ENCODE measurements at regions of chr1 and their contacts with region 1.

Region 1: DNA sequence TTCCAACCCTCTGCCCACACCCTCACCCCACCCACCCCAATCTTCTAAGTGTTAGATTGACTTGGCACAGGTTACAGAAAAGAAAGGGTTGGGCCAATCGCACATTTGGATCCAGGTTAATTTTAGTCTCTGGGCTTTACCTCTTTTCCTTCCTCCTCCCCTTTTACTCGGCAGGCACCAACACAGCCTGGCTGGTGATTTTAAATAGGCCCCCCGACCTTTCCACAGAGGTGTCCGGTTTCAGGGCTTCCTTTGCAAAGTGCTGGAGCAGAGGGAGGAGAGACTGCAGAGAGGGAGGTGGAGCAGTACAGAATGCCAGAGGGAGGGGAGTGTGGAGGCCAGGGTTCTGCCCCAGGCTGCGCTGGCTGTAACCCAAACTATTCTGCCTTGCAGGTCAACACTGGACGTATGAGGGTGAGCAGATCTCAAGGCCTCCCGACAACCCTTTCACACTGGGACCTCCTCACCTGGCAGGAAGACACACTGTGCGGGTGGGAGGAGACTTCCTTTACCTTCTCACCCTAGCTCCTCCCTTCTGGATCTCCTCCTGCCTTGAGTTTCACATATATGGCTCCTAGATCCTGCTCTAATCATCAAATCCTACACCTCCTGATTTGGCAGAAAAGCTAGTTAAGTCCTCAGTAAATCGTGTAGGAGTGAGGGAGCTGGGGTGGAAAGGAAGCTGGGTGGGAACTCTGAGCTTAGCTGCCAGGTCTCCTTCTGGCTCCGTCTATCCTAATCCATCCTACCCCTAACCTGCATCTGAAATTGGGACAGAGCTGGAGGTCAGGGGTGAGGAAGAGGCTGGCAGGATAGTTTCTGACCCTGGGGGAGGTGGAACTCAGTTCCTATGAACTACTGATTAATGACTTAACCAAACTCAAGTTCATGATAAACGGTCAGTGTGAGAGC is 2.4 kb downstream of the CA14 start:
- DNase-seq: no peak
- H3K4me3 Mint-ChIP-seq: no peak overlapping the region
- H3K27ac Mint-ChIP-seq: no peak overlapping the region
- H3K4me1 Mint-ChIP-seq: peaks cover 19% of the 10 kb centered on the region
- H3K27me3 Mint-ChIP-seq: peaks cover 37% of the 10 kb centered on the region

Region 2: GRCh38 chr1:150281837-150282653 is 22.0 kb after region 1 on chr1 and contains the start of gene CIART:
- intact Hi-C with region 1: loop called (anchors 1 kb)
- DNase-seq: peak; percentile 69
- H3K4me3 Mint-ChIP-seq: peak within 1 kb of the TSS; percentile 87
- H3K27ac Mint-ChIP-seq: peak within 1 kb of the TSS; percentile 80
- H3K4me1 Mint-ChIP-seq: peaks cover 38% of the 10 kb centered on the region
- H3K27me3 Mint-ChIP-seq: peaks cover 4% of the 10 kb centered on the region
- total RNA-seq, gene CIART: 3.4 TPM in 2 replicates

Region 3: GRCh38 chr1:150429805-150430204 is 169.8 kb after region 1 on chr1:
- intact Hi-C with region 1: loop called (anchors 1 kb)
- DNase-seq: no peak
- H3K4me3 Mint-ChIP-seq: no peak overlapping the region
- H3K27ac Mint-ChIP-seq: peak overlapping the region; percentile 3
- H3K4me1 Mint-ChIP-seq: peaks cover 4% of the 10 kb centered on the region
- H3K27me3 Mint-ChIP-seq: no peaks in the 10 kb centered on the region

Region 4: GRCh38 chr1:150515328-150516048 is 255.5 kb after region 1 on chr1 and contains the start of gene FALEC:
- intact Hi-C with region 1: loop called (anchors 1 kb)
- DNase-seq: peak; percentile 93
- H3K4me3 Mint-ChIP-seq: peak within 1 kb of the TSS; percentile 79
- H3K27ac Mint-ChIP-seq: peak within 1 kb of the TSS; percentile 83
- H3K4me1 Mint-ChIP-seq: peaks cover 16% of the 10 kb centered on the region
- H3K27me3 Mint-ChIP-seq: no peaks in the 10 kb centered on the region
- total RNA-seq, gene FALEC: not detected in 2 replicates

Region 5: DNA sequence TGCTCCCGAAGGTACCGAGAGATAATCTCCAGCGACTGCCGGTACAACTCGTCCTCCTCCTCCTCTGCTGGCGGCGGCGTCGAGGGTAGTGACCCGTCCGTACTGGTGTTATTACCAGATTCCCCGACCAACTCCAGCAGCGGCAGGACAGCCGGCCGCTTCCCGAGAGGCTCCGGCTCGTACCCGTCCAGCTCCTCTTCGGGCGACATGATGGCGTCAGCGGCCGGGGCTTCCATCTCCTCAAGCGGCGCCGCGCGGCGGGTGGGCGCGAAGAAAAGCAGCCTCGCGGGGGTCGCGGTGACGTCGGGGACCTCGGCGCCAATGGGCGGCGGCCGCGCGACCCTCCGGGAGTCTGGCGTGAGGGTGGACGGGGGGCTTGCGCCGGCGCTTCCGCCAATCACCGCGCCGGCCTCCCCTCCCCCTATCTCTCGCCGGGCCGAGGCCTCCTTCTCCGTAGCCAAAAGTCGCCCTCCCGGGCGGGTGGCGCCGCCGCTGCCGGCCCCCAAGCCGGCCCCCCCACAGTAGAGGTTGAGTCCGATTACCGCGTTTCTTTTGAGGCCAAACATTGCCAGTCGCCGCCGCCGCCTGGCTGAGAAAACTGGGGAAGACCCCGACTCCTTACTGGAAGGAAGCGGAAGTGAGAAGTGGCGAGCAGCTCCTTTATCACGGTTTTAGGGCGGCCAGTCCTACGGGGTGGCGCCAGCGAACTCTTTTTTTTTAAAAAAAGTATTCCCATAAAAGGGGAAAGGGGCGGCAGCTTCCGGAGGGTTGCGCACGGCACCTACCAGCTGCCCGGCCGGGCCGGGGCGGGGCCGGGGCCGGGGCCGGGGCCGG is 319.2 kb after region 1 on chr1 and contains the start of gene MCL1:
- intact Hi-C with region 1: no loop called
- DNase-seq: peak; percentile 92
- H3K4me3 Mint-ChIP-seq: peak within 1 kb of the TSS; percentile 95
- H3K27ac Mint-ChIP-seq: peak within 1 kb of the TSS; percentile 97
- H3K4me1 Mint-ChIP-seq: peaks cover 35% of the 10 kb centered on the region
- H3K27me3 Mint-ChIP-seq: peaks cover 2% of the 10 kb centered on the region
- total RNA-seq, gene MCL1: 311 and 317 TPM in 2 replicates

Region 6: GRCh38 chr1:150995896-150996295 is 735.9 kb after region 1 on chr1:
- intact Hi-C with region 1: loop called (anchors 5 kb)
- DNase-seq: peak; percentile 20
- H3K4me3 Mint-ChIP-seq: no peak overlapping the region
- H3K27ac Mint-ChIP-seq: no peak overlapping the region
- H3K4me1 Mint-ChIP-seq: peaks cover 8% of the 10 kb centered on the region
- H3K27me3 Mint-ChIP-seq: no peaks in the 10 kb centered on the region